ENCODE measurements at regions of chr7 and their contacts with region 1.

Region 1: DNA sequence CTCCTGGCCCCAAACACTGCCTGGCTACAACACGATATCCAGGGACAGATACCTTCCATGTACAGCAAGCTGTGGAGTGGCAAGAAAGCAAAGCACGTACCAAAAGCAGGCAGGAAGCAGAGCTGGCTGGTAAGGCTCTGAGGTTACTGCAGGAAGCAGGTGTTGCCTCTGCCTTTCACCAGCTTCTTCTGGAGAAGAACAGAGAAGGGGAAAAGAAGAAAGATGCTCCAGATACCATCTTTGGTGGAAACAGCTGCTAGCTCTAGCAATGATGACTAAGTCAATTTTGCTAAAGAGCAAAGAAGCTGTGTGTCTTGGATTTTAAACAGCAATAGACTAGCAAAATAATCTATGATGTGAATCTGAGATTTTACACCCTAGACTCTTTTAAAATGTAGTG is 34.9 kb upstream of the PRSS1 start:
- DNase-seq: no peak
- ATAC-seq: peak; percentile 40
- H3K4me3 Mint-ChIP-seq: peak overlapping the region; percentile 61
- H3K27ac Mint-ChIP-seq: peak overlapping the region; percentile 85
- H3K4me1 Mint-ChIP-seq: peaks cover 63% of the 10 kb centered on the region
- H3K27me3 Mint-ChIP-seq: no peaks in the 10 kb centered on the region

Region 2: DNA sequence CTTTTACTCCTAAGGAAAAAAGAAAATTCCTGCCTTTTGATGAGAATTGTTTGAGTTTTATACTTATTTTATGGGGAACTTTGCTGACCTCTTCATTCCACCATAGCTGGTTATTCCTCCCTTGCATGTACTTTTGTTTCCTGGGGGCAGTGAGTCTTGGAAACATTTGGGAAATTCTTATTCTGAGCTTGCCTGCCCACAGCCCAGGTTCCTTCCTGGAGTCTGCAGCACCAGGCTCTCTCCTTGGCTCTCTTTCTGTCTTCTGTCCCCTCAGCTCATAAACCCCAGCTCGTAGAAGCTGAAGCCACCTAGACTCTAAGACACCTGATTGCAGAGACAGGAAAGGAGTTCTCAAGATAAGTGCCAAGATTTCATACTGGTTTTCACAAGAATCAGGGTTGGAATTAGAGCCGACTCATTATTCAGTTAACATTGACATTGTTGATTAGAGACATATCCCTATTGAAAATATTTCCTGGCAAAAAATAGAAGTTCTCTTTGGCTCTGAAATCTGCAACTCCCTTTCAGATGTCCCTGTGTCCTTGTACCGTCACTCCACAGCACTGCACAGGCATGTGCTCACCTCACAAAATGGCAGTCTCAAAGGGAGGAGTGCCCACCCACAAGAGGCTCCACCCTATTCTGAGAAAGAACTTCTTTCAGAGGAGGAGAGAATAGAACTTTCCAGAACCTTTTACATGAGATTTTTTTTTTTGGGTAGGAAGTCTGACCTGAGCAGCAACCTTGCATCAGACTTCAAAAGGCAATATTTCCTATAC is 32.9 kb before region 1 on chr7:
- POLR2A ChIA-PET with region 1: no interaction called
- DNase-seq: no peak
- ATAC-seq: no peak
- H3K4me3 Mint-ChIP-seq: no peak overlapping the region
- H3K27ac Mint-ChIP-seq: no peak overlapping the region
- H3K4me1 Mint-ChIP-seq: peaks cover 14% of the 10 kb centered on the region
- H3K27me3 Mint-ChIP-seq: no peaks in the 10 kb centered on the region

Region 3: GRCh38 chr7:142788303-142789289 is 74.2 kb after region 1 on chr7:
- POLR2A ChIA-PET with region 1: interaction called, 14 read pairs
- DNase-seq: no peak
- ATAC-seq: no peak
- H3K4me3 Mint-ChIP-seq: peak overlapping the region; percentile 96
- H3K27ac Mint-ChIP-seq: peak overlapping the region; percentile 99
- H3K4me1 Mint-ChIP-seq: peaks cover 23% of the 10 kb centered on the region
- H3K27me3 Mint-ChIP-seq: no peaks in the 10 kb centered on the region